H1 (cell line): ENCODE measurements at regions of chr14 and their contacts with region 1.

Region 1: GRCh38 chr14:51979088-51979709 is 10.1 kb upstream of the RTRAF start:
- DNase-seq: peak; percentile 56 to 94
- H3K4me3 ChIP-seq: no peak overlapping the region
- H3K27ac ChIP-seq: no peak overlapping the region
- H3K4me1 ChIP-seq: no peaks in the 10 kb centered on the region
- H3K27me3 ChIP-seq: no peaks in the 10 kb centered on the region
- CTCF ChIP-seq: peak; percentile 76 to 95 (median 77)
- EP300 ChIP-seq: no peak
- POLR2A ChIP-seq: no peak
- RAD21 ChIP-seq: peak; percentile 84 to 88

Region 2: DNA sequence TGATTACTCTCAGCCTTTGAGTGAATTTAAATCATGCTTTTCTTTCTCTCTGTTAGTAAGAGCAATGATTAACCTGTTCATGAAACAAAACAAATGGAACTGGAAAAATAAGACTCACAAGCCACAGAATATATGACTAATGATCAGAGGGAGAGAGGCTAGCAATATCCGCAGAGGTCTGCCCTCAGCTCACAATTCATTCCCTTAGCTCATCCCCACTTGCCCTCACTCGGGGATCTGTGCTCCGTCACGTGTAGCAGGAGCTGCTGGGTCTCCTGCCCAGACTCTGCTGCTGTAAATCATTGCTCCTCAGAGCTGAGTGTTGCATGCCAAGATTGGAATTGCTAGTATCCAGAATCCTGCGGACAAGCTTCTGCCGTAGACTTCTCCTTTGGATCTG is 171.8 kb before region 1 on chr14:
- CTCF ChIA-PET with region 1: interaction called, 33 read pairs
- POLR2A ChIA-PET with region 1: no interaction called
- DNase-seq: no peak
- H3K4me3 ChIP-seq: no peak overlapping the region
- H3K27ac ChIP-seq: no peak overlapping the region
- H3K4me1 ChIP-seq: no peaks in the 10 kb centered on the region
- H3K27me3 ChIP-seq: no peaks in the 10 kb centered on the region
- CTCF ChIP-seq: no peak
- EP300 ChIP-seq: no peak
- POLR2A ChIP-seq: no peak
- RAD21 ChIP-seq: no peak

Region 3: GRCh38 chr14:51901475-51902024 is 77.6 kb before region 1 on chr14:
- CTCF ChIA-PET with region 1: interaction called, 10 read pairs
- POLR2A ChIA-PET with region 1: no interaction called
- DNase-seq: no peak
- H3K4me3 ChIP-seq: no peak overlapping the region
- H3K27ac ChIP-seq: no peak overlapping the region
- H3K4me1 ChIP-seq: no peaks in the 10 kb centered on the region
- H3K27me3 ChIP-seq: no peaks in the 10 kb centered on the region
- CTCF ChIP-seq: no peak
- EP300 ChIP-seq: no peak
- POLR2A ChIP-seq: no peak
- RAD21 ChIP-seq: no peak

Region 4: DNA sequence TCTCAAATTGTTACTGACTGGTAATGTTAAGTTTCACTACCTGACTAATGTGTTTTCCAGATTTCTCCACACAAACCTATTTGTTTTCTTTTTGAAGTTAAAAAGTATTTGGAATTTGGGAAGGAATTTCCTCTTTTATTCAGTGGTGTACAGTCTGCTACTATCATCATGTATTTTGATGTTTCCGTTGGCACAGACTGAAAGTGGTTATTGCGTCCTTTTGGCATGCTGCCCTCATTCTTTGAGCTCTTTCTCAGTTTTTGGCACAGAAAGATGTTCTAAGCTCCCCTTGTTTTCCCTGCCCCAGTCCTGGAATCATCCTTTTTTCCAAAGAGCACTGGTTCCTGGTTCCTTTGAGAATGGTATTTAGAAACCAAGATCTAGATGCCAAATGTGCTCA is 21.2 kb before region 1 on chr14:
- CTCF ChIA-PET with region 1: interaction called, 10 read pairs
- POLR2A ChIA-PET with region 1: no interaction called
- DNase-seq: no peak
- H3K4me3 ChIP-seq: no peak overlapping the region
- H3K27ac ChIP-seq: no peak overlapping the region
- H3K4me1 ChIP-seq: peaks cover 0 to 2% (median 0%) of the 10 kb centered on the region in 4 experiments; a peak in 1 of 7 replicates
- H3K27me3 ChIP-seq: no peaks in the 10 kb centered on the region
- CTCF ChIP-seq: no peak
- EP300 ChIP-seq: no peak
- POLR2A ChIP-seq: no peak
- RAD21 ChIP-seq: no peak

Region 5: GRCh38 chr14:51967521-51967920 is 11.7 kb before region 1 on chr14:
- CTCF ChIA-PET with region 1: interaction called, 48 read pairs
- POLR2A ChIA-PET with region 1: no interaction called
- DNase-seq: no peak
- H3K4me3 ChIP-seq: no peak overlapping the region
- H3K27ac ChIP-seq: no peak overlapping the region
- H3K4me1 ChIP-seq: peaks cover 0 to 2% (median 0%) of the 10 kb centered on the region in 4 experiments; a peak in 1 of 7 replicates
- H3K27me3 ChIP-seq: no peaks in the 10 kb centered on the region
- CTCF ChIP-seq: no peak
- EP300 ChIP-seq: no peak
- POLR2A ChIP-seq: no peak
- RAD21 ChIP-seq: no peak

Region 6: DNA sequence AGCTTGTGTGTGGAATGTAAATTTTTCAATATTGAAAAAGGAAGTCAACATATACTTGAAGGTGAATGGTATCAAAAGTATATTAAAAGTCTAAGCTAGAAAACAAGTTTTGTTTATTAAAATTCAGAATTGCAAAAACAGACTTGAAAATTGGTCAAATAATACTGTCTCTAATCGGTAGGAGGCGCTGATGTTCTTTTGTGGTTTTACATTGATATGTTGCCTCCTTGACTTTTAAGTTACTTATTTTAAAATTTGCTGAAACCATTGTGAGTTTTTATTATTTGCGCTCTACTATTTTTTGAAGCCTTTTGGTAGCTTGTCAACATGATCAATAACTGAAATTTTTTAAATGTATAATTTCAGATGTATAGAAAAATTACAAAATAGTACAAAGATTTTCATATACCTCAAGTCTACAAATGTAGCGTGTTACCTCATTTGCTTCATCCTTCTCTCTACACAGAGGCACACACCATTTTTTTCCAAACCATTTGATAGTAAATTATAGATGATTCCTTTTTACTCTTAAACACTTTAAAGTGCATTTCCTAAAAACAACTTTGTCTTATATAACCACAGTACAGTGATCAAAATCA is 17.0 kb after region 1 on chr14:
- CTCF ChIA-PET with region 1: interaction called, 20 read pairs
- POLR2A ChIA-PET with region 1: no interaction called
- DNase-seq: no peak
- H3K4me3 ChIP-seq: no peak overlapping the region
- H3K27ac ChIP-seq: no peak overlapping the region
- H3K4me1 ChIP-seq: no peaks in the 10 kb centered on the region
- H3K27me3 ChIP-seq: no peaks in the 10 kb centered on the region
- CTCF ChIP-seq: peak in 2 of 3 experiments; percentile 21 to 48; a peak in 2 of 4 replicates
- EP300 ChIP-seq: no peak
- POLR2A ChIP-seq: no peak
- RAD21 ChIP-seq: peak; percentile 57 to 66

Region 7: DNA sequence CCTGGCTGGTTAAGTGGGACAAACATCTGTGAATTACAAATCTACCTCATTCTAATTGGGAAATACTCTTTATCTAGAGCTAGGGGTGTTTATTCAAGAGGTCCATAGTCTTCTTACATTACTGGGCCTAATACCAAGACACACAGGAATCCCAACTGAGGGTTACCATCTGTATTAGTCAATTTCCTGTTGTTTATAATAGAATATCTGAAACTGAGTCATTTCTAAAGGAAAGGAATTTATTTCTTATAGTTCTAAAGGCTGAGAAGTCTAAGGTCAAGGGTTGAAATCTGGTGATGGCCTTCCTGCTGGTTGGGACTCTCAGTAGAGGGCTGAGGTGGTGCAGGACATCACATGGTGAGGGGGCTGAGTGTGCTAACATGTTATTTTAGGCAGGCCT is 46.1 kb after region 1 on chr14:
- CTCF ChIA-PET with region 1: no interaction called
- POLR2A ChIA-PET with region 1: no interaction called
- DNase-seq: no peak
- H3K4me3 ChIP-seq: no peak overlapping the region
- H3K27ac ChIP-seq: no peak overlapping the region
- H3K4me1 ChIP-seq: peaks cover 0 to 6% (median 4%) of the 10 kb centered on the region in 4 experiments; a peak in 2 of 7 replicates
- H3K27me3 ChIP-seq: no peaks in the 10 kb centered on the region
- CTCF ChIP-seq: no peak
- EP300 ChIP-seq: no peak
- POLR2A ChIP-seq: no peak
- RAD21 ChIP-seq: no peak